ENCODE measurements at regions of chr10 and their contacts with region 1.

Region 1: GRCh38 chr10:12484941-12485805 is 135.8 kb downstream of the CAMK1D start:
- DNase-seq: peak; percentile 60 to 62
- H3K4me3 ChIP-seq: peak overlapping the region; percentile 2; the same call in 1 of the 2 replicates
- H3K4me3 Mint-ChIP-seq: peak overlapping the region; percentile 56
- H3K27ac Mint-ChIP-seq: peak overlapping the region; percentile 60
- H3K4me1 ChIP-seq: peaks cover 13% of the 10 kb centered on the region
- H3K4me1 Mint-ChIP-seq: peaks cover 22% of the 10 kb centered on the region
- H3K27me3 ChIP-seq: no peaks in the 10 kb centered on the region
- H3K27me3 Mint-ChIP-seq: no peaks in the 10 kb centered on the region
- CTCF ChIP-seq: peak; percentile 27 to 35

Region 2: GRCh38 chr10:12350167-12350872 is 134.9 kb before region 1 on chr10:
- CTCF ChIA-PET with region 1: no interaction called
- POLR2A ChIA-PET with region 1: no interaction called
- intact Hi-C with region 1: loop called (anchors 5 kb)
- DNase-seq: peak; percentile 48 to 53
- H3K4me3 ChIP-seq: peak overlapping the region; percentile 67
- H3K4me3 Mint-ChIP-seq: peak overlapping the region; percentile 81
- H3K27ac Mint-ChIP-seq: no peak overlapping the region
- H3K4me1 ChIP-seq: peaks cover 18% of the 10 kb centered on the region
- H3K4me1 Mint-ChIP-seq: peaks cover 10% of the 10 kb centered on the region
- H3K27me3 ChIP-seq: 0 out of 2 replicates have a peak, but pooled peaks cover 2% of the 10 kb centered on the region
- H3K27me3 Mint-ChIP-seq: peaks cover 22% of the 10 kb centered on the region
- CTCF ChIP-seq: peak in 1 of 2 experiments; percentile 8